ENCODE measurements at regions of chr3 and their contacts with region 1.

Region 1: GRCh38 chr3:151918253-151919029 is 45.0 kb downstream of the SUCNR1 start:
- DNase-seq: no peak
- H3K4me3 ChIP-seq: no peak overlapping the region
- H3K27ac ChIP-seq: no peak overlapping the region
- H3K4me1 ChIP-seq: peaks cover 0 to 7% (median 0%) of the 10 kb centered on the region in 4 donors
- H3K27me3 ChIP-seq: no peaks in the 10 kb centered on the region
- CTCF ChIP-seq: peak; percentile 61 to 70 (median 67)
- EP300 ChIP-seq: no peak
- POLR2A ChIP-seq: no peak

Region 2: GRCh38 chr3:151439652-151440129 is 478.8 kb before region 1 on chr3:
- intact Hi-C with region 1: loop called (anchors 2 kb)
- DNase-seq: no peak
- H3K4me3 ChIP-seq: no peak overlapping the region
- H3K27ac ChIP-seq: no peak overlapping the region
- H3K4me1 ChIP-seq: peaks cover 0 to 1% (median 0%) of the 10 kb centered on the region in 4 donors
- H3K27me3 ChIP-seq: no peaks in the 10 kb centered on the region
- CTCF ChIP-seq: peak; percentile 75 to 94 (median 92)
- EP300 ChIP-seq: no peak
- POLR2A ChIP-seq: no peak

Region 3: GRCh38 chr3:151468284-151468917 is 450.0 kb before region 1 on chr3:
- intact Hi-C with region 1: loop called (anchors 10 kb)
- DNase-seq: no peak
- H3K4me3 ChIP-seq: no peak overlapping the region
- H3K27ac ChIP-seq: no peak overlapping the region
- H3K4me1 ChIP-seq: no peaks in the 10 kb centered on the region
- H3K27me3 ChIP-seq: no peaks in the 10 kb centered on the region
- CTCF ChIP-seq: peak; percentile 64 to 90 (median 81)
- EP300 ChIP-seq: no peak
- POLR2A ChIP-seq: no peak

Measured in esophagus muscularis mucosa (tissue), 4 donors.